ENCODE measurements at regions of chr17 and their contacts with region 1.

Region 1: DNA sequence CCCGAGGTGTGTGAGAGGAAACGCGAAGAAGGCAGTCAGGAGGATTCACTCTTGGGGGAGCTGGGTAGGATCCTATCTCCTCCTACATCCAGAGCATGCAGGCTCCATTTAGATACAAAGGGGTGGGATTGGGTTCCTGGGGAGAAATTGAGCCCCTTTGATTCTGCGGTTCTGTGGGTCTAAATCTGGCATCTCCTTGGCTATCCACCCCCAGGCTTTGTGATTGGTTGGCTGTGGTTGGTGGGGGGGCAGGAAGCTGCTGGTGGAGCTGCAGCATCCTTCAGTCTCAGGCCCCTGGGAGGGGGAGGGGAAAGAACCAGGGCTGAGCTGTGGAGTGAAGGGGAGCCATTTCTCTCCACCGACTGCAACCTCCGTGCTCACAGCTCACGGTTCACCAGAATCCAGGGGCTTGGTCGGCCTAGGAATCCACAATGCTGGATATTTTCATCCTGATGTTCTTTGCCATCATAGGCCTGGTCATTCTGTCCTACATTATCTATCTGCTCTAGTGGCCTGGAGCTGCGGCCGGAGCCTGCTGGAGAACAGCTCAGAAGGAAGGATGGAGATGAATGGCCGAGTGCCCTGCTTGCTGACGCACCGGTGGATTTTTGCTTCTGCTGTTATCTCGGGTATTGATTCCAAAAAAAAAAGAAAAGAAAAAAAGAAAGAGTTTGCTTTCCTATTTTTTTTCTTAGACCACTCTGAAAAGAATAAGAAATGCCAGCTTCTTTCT is at the start of gene LASP1NB:
- DNase-seq: peak; percentile 72
- H3K4me3 Mint-ChIP-seq: no peak within 1 kb of the TSS
- H3K27ac Mint-ChIP-seq: peak within 1 kb of the TSS; percentile 46
- H3K4me1 Mint-ChIP-seq: peaks cover 36% of the 10 kb centered on the region
- H3K27me3 Mint-ChIP-seq: no peaks in the 10 kb centered on the region

Region 2: DNA sequence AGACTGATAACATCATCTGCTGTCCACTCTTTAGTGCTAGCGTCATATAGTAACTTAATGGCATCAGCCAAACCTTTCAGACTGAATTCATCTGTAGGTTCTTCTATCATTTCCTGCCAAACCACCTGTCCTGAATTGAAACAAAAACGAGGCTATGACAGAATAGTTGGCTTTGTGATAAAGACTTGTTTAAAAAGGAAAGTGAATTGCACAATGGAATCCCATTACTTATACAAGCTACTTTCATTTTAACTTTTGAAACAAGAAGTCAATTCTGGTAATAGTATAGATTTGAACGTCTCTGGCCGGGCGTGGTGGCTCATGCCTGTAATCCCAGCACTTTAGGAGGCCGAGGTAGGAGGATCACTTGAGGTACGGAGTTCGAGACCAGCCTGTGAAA is 18.2 kb after region 1 on chr17:
- CTCF ChIA-PET with region 1: interaction called, 5 read pairs
- intact Hi-C with region 1: loop called (anchors 2 kb)
- DNase-seq: peak; percentile 67
- H3K4me3 Mint-ChIP-seq: no peak overlapping the region
- H3K27ac Mint-ChIP-seq: peak overlapping the region; percentile 84
- H3K4me1 Mint-ChIP-seq: peaks cover 13% of the 10 kb centered on the region
- H3K27me3 Mint-ChIP-seq: no peaks in the 10 kb centered on the region

Region 3: DNA sequence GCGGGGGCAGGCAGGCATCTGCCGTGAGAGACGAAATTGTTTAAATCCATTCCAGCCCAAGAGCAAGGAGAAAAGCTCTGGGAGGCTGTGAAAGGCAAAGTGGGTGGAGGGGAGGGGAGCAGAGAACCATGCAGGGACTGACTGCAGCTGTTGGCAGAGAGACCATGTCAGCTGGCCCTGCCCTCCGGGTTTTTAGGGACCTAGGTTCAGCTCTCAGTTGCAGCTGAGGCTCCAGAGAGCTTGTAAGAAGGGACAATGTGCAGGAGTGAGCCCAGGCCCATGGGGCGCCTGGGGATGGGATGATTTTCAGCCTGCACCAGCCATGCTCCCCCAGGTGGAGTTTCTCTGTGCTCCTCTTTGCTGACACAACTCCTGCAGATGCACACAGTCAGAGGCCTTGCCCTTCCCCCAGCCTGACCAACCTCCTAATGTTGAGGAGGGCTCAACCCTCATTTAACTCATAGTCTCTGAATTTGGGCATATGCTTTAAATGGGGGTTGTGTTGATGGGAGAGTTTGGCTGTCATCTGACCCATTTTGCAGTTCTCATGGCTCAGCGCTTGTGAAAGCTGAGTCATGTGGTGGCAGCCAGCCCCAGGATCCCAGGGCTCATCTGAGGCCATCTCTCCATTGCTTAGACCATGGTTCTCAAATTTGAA is 155.1 kb after region 1 on chr17:
- CTCF ChIA-PET with region 1: no interaction called
- intact Hi-C with region 1: no loop called
- DNase-seq: no peak
- H3K4me3 Mint-ChIP-seq: no peak overlapping the region
- H3K27ac Mint-ChIP-seq: no peak overlapping the region
- H3K4me1 Mint-ChIP-seq: no peaks in the 10 kb centered on the region
- H3K27me3 Mint-ChIP-seq: no peaks in the 10 kb centered on the region

Measured in activated naive CD4-positive, alpha-beta T cell treated with anti-CD3 and anti-CD28 coated beads for 36 hours (primary cell).